Prostate gland (tissue), 2 donors: ENCODE measurements at regions of chr15 and their contacts with region 1.

Region 1: DNA sequence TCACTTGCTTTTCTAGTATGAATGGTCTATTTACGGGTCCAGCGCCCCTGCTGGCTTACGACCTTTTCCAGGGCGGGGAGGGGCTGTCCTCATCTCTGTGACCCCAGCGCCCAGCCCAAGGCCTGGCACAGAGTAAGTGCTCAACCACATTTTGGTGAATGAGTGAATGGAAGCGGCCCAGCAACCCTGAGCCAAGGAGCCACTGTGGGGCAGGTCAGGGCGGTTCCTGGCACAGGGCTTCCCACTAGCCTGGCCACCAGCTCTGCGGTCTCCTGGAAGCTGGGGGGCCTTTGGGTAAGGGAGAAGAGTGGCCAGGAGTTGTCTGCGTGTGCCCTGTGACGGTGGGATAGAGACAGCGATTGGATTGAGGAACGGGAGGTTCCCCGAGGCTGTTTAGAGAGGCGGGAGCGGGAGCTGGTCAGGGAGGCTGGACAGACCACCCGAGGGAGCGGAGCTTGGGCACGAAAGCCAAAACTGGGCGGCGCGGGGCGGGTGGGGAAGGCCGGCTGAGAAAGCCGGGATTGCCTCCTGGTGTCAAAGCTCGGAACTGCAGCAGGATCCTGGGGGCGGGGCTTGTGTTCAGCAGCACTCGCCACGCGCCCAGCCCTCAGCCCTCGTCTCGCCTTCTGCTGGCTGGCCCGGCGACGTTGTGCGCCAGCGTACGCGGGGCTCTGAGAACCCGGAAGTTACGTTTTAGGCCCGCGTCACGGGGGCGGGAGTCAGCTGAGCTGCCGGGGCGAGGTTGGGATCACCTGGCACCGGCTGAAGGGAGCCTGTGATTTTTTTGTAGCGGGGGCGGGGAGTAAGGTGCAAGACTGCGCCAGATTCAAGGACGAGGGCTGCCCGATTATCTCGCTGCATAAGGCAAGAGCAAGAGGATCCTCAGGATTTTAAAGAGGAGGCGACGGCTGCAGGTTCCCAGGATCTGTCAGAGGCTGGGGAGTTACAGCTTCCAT is at the start of gene VPS18:
- DNase-seq: peak; percentile 99
- H3K4me3 ChIP-seq: peak within 1 kb of the TSS; percentile 54 to 82
- H3K27ac ChIP-seq: peak within 1 kb of the TSS; percentile 91 to 93
- H3K4me1 ChIP-seq: peaks cover 6% of the 10 kb centered on the region
- H3K27me3 ChIP-seq: no peaks in the 10 kb centered on the region
- CTCF ChIP-seq: peak; percentile 94 to 100 (median 99)
- POLR2A ChIP-seq: peak; percentile 93
- total RNA-seq, gene VPS18: 32.4 to 39.0 TPM

Region 2: DNA sequence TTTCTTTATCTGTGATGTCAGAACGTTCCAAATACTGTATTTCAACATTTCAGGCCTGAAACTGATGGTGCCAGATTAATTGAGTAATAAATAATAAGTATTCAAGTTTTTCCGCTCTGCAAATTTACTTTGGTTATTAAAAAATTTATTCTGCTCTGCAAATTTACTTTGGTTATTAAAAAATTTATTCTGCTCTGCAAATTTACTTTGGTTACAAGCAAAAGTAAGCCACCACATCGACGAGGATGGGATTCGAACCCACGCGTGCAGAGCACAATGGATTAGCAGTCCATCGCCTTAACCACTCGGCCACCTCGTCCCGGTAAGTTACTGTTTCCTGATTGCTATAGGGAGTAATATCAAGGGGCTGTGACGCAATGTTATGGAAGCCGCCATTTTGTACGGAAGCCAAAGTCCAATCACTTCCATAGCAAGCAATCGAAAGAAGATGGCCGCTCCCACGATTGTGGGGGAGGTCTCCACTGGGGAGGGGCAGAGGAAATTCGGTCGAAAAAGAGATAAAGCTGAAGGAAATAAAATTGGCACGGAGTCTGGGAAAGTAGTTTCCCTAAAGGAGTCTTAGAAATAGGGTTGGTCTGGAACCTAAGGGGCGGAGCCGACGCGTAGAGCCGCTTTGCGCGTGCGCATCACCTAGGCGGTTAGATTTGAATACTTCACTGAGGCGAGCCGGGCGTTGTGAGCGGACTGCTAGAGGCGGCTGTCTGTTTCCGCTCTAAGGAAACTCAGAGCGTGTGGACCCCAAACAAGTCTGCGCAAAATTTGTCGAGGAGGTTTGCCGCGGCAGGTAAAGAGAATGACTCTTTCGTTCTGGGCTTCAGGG is 300.2 kb before region 1 on chr15 and contains the start of gene KNL1:
- intact Hi-C with region 1: loop called (anchors 10 kb)
- DNase-seq: peak; percentile 94
- H3K4me3 ChIP-seq: peak within 1 kb of the TSS; percentile 44 to 46
- H3K27ac ChIP-seq: peak within 1 kb of the TSS; percentile 91 to 93
- H3K4me1 ChIP-seq: no peaks in the 10 kb centered on the region
- H3K27me3 ChIP-seq: no peaks in the 10 kb centered on the region
- CTCF ChIP-seq: peak in 1 of 4 experiments; percentile 10
- POLR2A ChIP-seq: no peak
- total RNA-seq, gene KNL1: 1.6 to 18.7 TPM

Region 3: DNA sequence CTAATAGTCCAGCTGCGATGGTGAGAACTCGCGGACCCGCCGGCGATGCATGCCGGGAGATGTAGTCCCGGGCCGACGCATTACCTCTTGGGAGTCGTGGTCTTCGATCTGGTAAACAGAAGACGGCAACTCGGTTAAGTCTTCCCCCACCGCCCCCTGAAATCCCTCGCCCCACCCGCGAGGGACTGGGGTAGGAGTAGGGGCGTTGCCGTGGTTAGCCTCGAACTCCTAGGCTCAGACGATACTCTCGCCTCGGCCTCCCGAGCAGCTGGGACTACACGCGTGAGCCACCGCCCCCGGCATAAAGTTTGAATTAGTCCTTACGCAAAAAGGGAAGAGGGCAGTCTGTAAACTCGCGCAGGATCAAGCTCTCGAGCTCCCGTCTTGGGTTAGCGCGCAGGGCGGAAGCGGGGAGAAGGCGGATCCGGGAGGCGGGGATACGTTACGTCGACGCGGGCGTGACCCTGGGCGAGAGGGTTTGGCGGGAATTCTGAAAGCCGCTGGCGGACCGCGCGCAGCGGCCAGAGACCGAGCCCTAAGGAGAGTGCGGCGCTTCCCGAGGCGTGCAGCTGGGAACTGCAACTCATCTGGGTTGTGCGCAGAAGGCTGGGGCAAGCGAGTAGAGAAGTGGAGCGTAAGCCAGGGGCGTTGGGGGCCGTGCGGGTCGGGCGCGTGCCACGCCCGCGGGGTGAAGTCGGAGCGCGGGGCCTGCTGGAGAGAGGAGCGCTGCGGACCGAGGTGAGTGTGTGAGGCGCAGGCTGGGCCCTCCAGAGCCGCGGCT is 199.1 kb before region 1 on chr15 and contains the start of gene RAD51:
- intact Hi-C with region 1: loop called (anchors 10 kb)
- DNase-seq: peak; percentile 87
- H3K4me3 ChIP-seq: peak within 1 kb of the TSS; percentile 66 to 76
- H3K27ac ChIP-seq: peak within 1 kb of the TSS; percentile 98 to 99
- H3K4me1 ChIP-seq: no peaks in the 10 kb centered on the region
- H3K27me3 ChIP-seq: no peaks in the 10 kb centered on the region
- CTCF ChIP-seq: no peak
- POLR2A ChIP-seq: peak; percentile 60
- total RNA-seq, gene RAD51: 0.82 to 5.1 TPM

Region 4: GRCh38 chr15:40746916-40747514 is 147.0 kb before region 1 on chr15:
- intact Hi-C with region 1: loop called (anchors 5 kb)
- DNase-seq: no peak
- H3K4me3 ChIP-seq: no peak overlapping the region
- H3K27ac ChIP-seq: no peak overlapping the region
- H3K4me1 ChIP-seq: no peaks in the 10 kb centered on the region
- H3K27me3 ChIP-seq: no peaks in the 10 kb centered on the region
- CTCF ChIP-seq: no peak
- POLR2A ChIP-seq: no peak

Region 5: DNA sequence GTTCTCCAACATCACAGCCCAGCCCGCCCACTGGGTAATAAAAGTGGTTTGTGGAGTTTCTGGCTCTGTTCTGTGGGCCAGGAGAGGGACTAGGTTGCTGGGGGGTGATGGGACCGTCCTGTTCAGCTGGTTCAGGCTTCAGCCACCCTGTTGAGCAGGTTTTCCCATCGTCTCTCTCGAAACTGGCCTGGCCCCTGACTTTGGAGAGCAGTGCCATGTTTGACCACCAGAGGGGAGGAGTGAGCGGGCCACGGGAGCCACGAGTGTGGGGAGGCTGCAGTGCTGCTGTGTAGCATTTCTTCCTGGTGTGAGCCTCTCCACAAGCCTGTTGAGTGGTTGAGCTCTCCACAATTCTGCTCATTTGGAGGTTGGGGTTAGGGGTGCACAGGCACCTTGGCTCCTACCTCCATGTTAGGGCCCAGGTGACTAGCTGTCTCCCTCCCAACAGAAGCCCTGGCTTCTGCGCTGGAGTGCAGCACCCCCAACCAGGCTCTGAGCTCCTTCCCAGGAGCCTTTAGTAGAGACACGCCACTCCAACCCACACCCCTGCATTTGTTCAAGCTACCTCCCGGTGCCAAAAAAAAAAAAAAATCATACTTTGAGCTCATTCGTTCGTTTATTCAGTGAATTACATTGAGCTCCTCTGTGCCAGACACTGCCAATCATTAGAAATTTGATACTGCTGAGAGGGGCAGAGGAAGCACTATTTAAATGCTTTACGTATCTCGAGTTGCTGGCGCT is 36.2 kb before region 1 on chr15:
- intact Hi-C with region 1: loop called (anchors 5 kb)
- DNase-seq: peak; percentile 90
- H3K4me3 ChIP-seq: no peak overlapping the region
- H3K27ac ChIP-seq: peak overlapping the region; percentile 85 to 88
- H3K4me1 ChIP-seq: peaks cover 14% of the 10 kb centered on the region
- H3K27me3 ChIP-seq: no peaks in the 10 kb centered on the region
- CTCF ChIP-seq: peak; percentile 94 to 99 (median 97)
- POLR2A ChIP-seq: no peak